ENCODE measurements at regions of chr6 and their contacts with region 1.

Region 1: GRCh38 chr6:168264593-168265335 is 54.8 kb downstream of the DACT2 start:
- DNase-seq: peak; percentile 91
- ATAC-seq: peak; percentile 50
- H3K4me3 ChIP-seq: peak overlapping the region; percentile 22 to 65 (median 33)
- H3K27ac ChIP-seq: peak overlapping the region; percentile 79
- H3K4me1 ChIP-seq: peaks cover 86% of the 10 kb centered on the region
- H3K27me3 ChIP-seq: no peaks in the 10 kb centered on the region
- CTCF ChIP-seq: no peak; the same call in 1 of the 2 replicates
- EP300 ChIP-seq: peak in 1 of 2 experiments; percentile 71; a peak in 3 of 4 replicates
- POLR2A ChIP-seq: peak in 1 of 2 experiments; percentile 48; a peak in 2 of 4 replicates
- RAD21 ChIP-seq: peak; percentile 15; the same call in 1 of the 2 replicates

Region 2: GRCh38 chr6:168201383-168201782 is 63.4 kb before region 1 on chr6:
- CTCF ChIA-PET with region 1: no interaction called
- POLR2A ChIA-PET with region 1: interaction called, 4 read pairs
- in situ Hi-C with region 1: no loop called
- intact Hi-C with region 1: loop called (anchors 2 kb)
- DNase-seq: peak; percentile 63
- ATAC-seq: peak; percentile 85
- H3K4me3 ChIP-seq: peak overlapping the region in 2 of 3 experiments; percentile 25 to 45; a peak in 1 of 6 replicates
- H3K27ac ChIP-seq: peak overlapping the region; percentile 59
- H3K4me1 ChIP-seq: peaks cover 59% of the 10 kb centered on the region
- H3K27me3 ChIP-seq: no peaks in the 10 kb centered on the region
- CTCF ChIP-seq: peak; percentile 91
- EP300 ChIP-seq: no peak
- POLR2A ChIP-seq: no peak
- RAD21 ChIP-seq: peak; percentile 93

Region 3: GRCh38 chr6:168247443-168248147 is 17.2 kb before region 1 on chr6:
- CTCF ChIA-PET with region 1: no interaction called
- POLR2A ChIA-PET with region 1: interaction called, 7 read pairs
- in situ Hi-C with region 1: no loop called
- intact Hi-C with region 1: loop called (anchors 1 kb)
- DNase-seq: peak; percentile 40
- ATAC-seq: peak; percentile 57
- H3K4me3 ChIP-seq: peak overlapping the region in 1 of 3 experiments; percentile 24; a peak in 2 of 6 replicates
- H3K27ac ChIP-seq: no peak overlapping the region
- H3K4me1 ChIP-seq: peaks cover 82% of the 10 kb centered on the region
- H3K27me3 ChIP-seq: no peaks in the 10 kb centered on the region
- CTCF ChIP-seq: no peak
- EP300 ChIP-seq: 0 out of 4 replicates have a peak, but pooled peaks of 1 of the 2 experiments have one; percentile 15
- POLR2A ChIP-seq: no peak
- RAD21 ChIP-seq: no peak

Region 4: GRCh38 chr6:168326294-168327261 is 61.8 kb after region 1 on chr6:
- CTCF ChIA-PET with region 1: no interaction called
- POLR2A ChIA-PET with region 1: interaction called, 8 read pairs
- in situ Hi-C with region 1: no loop called
- intact Hi-C with region 1: loop called (anchors 2 kb)
- DNase-seq: peak; percentile 99
- ATAC-seq: peak; percentile 99
- H3K4me3 ChIP-seq: peak overlapping the region; percentile 22 to 51 (median 30); a peak in 4 of 6 replicates
- H3K27ac ChIP-seq: peak overlapping the region; percentile 94
- H3K4me1 ChIP-seq: peaks cover 74% of the 10 kb centered on the region
- H3K27me3 ChIP-seq: no peaks in the 10 kb centered on the region
- CTCF ChIP-seq: no peak
- EP300 ChIP-seq: peak; percentile 53 to 95; a peak in 2 of 4 replicates
- POLR2A ChIP-seq: peak; percentile 21 to 65; a peak in 2 of 4 replicates
- RAD21 ChIP-seq: peak; percentile 26; the same call in 1 of the 2 replicates

Measured in HepG2 (cell line).